ENCODE measurements at regions of chrX and their contacts with region 1.

Region 1: GRCh38 chrX:19535476-19535875 is 20.2 kb upstream of the MAP3K15 start:
- DNase-seq: peak; percentile 20 to 59 (median 57)
- H3K4me3 ChIP-seq: no peak overlapping the region
- H3K27ac ChIP-seq: no peak overlapping the region
- H3K4me1 ChIP-seq: no peaks in the 10 kb centered on the region
- H3K27me3 ChIP-seq: peaks cover 0 to 5% (median 0%) of the 10 kb centered on the region in 5 experiments

Region 2: GRCh38 chrX:19372170-19372546 is 163.3 kb before region 1 on chrX:
- CTCF ChIA-PET with region 1: interaction called, 34 read pairs
- POLR2A ChIA-PET with region 1: no interaction called
- DNase-seq: peak; percentile 62 to 83 (median 79)
- H3K4me3 ChIP-seq: peak overlapping the region in 6 of 7 experiments; percentile 40 to 73 (median 56)
- H3K27ac ChIP-seq: no peak overlapping the region
- H3K4me1 ChIP-seq: peaks cover 0 to 10% (median 6%) of the 10 kb centered on the region in 4 experiments
- H3K27me3 ChIP-seq: peaks cover 0 to 13% (median 0%) of the 10 kb centered on the region in 5 experiments

Region 3: GRCh38 chrX:19382555-19383145 is 152.8 kb before region 1 on chrX:
- CTCF ChIA-PET with region 1: interaction called, 16 read pairs
- POLR2A ChIA-PET with region 1: no interaction called
- DNase-seq: peak; percentile 37 to 69 (median 64)
- H3K4me3 ChIP-seq: no peak overlapping the region
- H3K27ac ChIP-seq: no peak overlapping the region
- H3K4me1 ChIP-seq: no peaks in the 10 kb centered on the region
- H3K27me3 ChIP-seq: peaks cover 0 to 3% (median 0%) of the 10 kb centered on the region in 5 experiments

Region 4: DNA sequence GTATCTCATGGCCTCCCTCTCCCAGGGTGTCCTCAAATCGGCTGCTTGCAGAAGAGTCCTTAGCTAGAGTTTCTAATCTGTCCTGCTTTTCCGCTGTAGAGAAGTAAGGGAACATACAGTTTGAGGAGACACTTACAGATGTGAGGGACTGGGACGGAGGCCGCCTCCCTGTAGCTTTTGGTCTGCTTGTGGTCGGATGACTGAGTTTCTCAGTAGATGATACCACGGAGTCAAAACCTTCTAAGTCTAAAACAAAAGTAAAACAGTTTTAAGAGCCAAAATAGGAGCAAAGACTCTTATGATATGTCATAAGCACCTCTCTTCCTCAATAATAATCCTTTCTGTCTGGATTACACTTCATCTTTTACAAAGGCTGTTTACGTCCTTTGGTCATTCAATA is 14.4 kb after region 1 on chrX:
- CTCF ChIA-PET with region 1: no interaction called
- POLR2A ChIA-PET with region 1: no interaction called
- DNase-seq: no peak
- H3K4me3 ChIP-seq: no peak overlapping the region
- H3K27ac ChIP-seq: no peak overlapping the region
- H3K4me1 ChIP-seq: peaks cover 0 to 2% (median 0%) of the 10 kb centered on the region in 4 experiments
- H3K27me3 ChIP-seq: no peaks in the 10 kb centered on the region